Heart right ventricle (tissue), 16 donors: ENCODE measurements at regions of chr3 and their contacts with region 1.

Region 1: GRCh38 chr3:71305231-71306206 is 278.0 kb downstream of the FOXP1 start:
- DNase-seq: peak; percentile 21 to 42
- ATAC-seq: peak; percentile 68 to 94 (median 90)
- H3K4me3 ChIP-seq: peak overlapping the region in 9 of 10 donors; percentile 17 to 54 (median 41)
- H3K27ac ChIP-seq: peak overlapping the region; percentile 3 to 81 (median 72)
- H3K4me1 ChIP-seq: peaks cover 0 to 54% (median 36%) of the 10 kb centered on the region in 9 donors
- H3K27me3 ChIP-seq: no peaks in the 10 kb centered on the region
- CTCF ChIP-seq: no peak

Region 2: GRCh38 chr3:70531063-70531657 is 774.4 kb before region 1 on chr3:
- intact Hi-C with region 1: loop called in 1 of 10 experiments (anchors 10 kb)
- DNase-seq: no peak
- ATAC-seq: no peak
- H3K4me3 ChIP-seq: no peak overlapping the region
- H3K27ac ChIP-seq: no peak overlapping the region
- H3K4me1 ChIP-seq: no peaks in the 10 kb centered on the region
- H3K27me3 ChIP-seq: peaks cover 0 to 10% (median 4%) of the 10 kb centered on the region in 7 donors
- CTCF ChIP-seq: peak in 8 of 9 donors; percentile 31 to 70 (median 58)

Region 3: GRCh38 chr3:70716832-70717231 is 588.7 kb before region 1 on chr3:
- intact Hi-C with region 1: loop called in 4 of 10 experiments (anchors 5 to 10 kb)
- DNase-seq: peak; percentile 14 to 32
- ATAC-seq: peak in 5 of 8 donors; percentile 49 to 88 (median 62)
- H3K4me3 ChIP-seq: no peak overlapping the region
- H3K27ac ChIP-seq: no peak overlapping the region
- H3K4me1 ChIP-seq: no peaks in the 10 kb centered on the region
- H3K27me3 ChIP-seq: no peaks in the 10 kb centered on the region
- CTCF ChIP-seq: peak; percentile 17 to 72 (median 54)

Region 4: GRCh38 chr3:71064288-71064955 is 241.1 kb before region 1 on chr3:
- intact Hi-C with region 1: loop called in 2 of 10 experiments (anchors 5 to 10 kb)
- DNase-seq: peak in 1 of 2 donors; percentile 50
- ATAC-seq: peak; percentile 35 to 72 (median 56)
- H3K4me3 ChIP-seq: peak overlapping the region; percentile 26 to 78 (median 68)
- H3K27ac ChIP-seq: peak overlapping the region; percentile 66 to 98 (median 94)
- H3K4me1 ChIP-seq: peaks cover 5 to 73% (median 58%) of the 10 kb centered on the region in 9 donors
- H3K27me3 ChIP-seq: no peaks in the 10 kb centered on the region
- CTCF ChIP-seq: no peak

Region 5: GRCh38 chr3:71130471-71131374 is 174.8 kb before region 1 on chr3:
- intact Hi-C with region 1: loop called in 1 of 10 experiments (anchors 5 kb)
- DNase-seq: peak; percentile 33 to 66
- ATAC-seq: peak; percentile 48 to 80 (median 72)
- H3K4me3 ChIP-seq: peak overlapping the region; percentile 33 to 65 (median 58)
- H3K27ac ChIP-seq: peak overlapping the region; percentile 74 to 94 (median 87)
- H3K4me1 ChIP-seq: peaks cover 10 to 82% (median 62%) of the 10 kb centered on the region in 9 donors
- H3K27me3 ChIP-seq: no peaks in the 10 kb centered on the region
- CTCF ChIP-seq: no peak

Region 6: DNA sequence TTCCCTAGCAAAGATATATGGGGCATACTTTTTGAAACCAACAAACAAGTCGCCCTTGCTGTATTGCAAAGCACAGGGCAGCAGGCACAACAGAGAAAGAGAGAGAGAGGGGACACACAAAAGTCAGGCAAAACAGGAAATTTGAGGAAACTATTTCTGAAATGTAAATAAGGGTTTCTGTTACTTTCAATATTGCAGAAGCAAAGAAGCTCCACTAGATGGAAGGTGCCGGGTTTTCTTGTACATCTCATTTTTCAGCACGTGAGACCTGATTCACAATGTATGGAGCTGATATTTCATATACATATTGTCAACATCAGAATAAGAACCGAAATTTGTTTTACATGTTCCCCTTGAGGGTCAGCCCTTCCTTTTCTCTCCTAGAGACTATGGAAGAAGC is 150.6 kb after region 1 on chr3:
- intact Hi-C with region 1: no loop called
- DNase-seq: no peak
- ATAC-seq: peak in 1 of 8 donors; percentile 38
- H3K4me3 ChIP-seq: peak overlapping the region in 1 of 10 donors; percentile 12
- H3K27ac ChIP-seq: peak overlapping the region in 1 of 10 donors; percentile 42
- H3K4me1 ChIP-seq: peaks cover 0 to 45% (median 11%) of the 10 kb centered on the region in 9 donors
- H3K27me3 ChIP-seq: no peaks in the 10 kb centered on the region
- CTCF ChIP-seq: no peak

Region 7: GRCh38 chr3:71570546-71570945 is 265.0 kb after region 1 on chr3:
- intact Hi-C with region 1: no loop called
- DNase-seq: no peak
- ATAC-seq: no peak
- H3K4me3 ChIP-seq: no peak overlapping the region
- H3K27ac ChIP-seq: no peak overlapping the region
- H3K4me1 ChIP-seq: peaks cover 0 to 19% (median 0%) of the 10 kb centered on the region in 9 donors
- H3K27me3 ChIP-seq: no peaks in the 10 kb centered on the region
- CTCF ChIP-seq: no peak